Activated CD4-positive, alpha-beta T cell treated with anti-CD3 and anti-CD28 coated beads, Interleukin-2, amount 10 ng/mL, durations not matched to agents 24 days and 14 days (primary cell): ENCODE measurements at regions of chr4 and their contacts with region 1.

Region 1: GRCh38 chr4:100208964-100209363 is 18.7 kb upstream of the DDIT4L start:
- DNase-seq: peak; percentile 69
- H3K4me3 Mint-ChIP-seq: no peak overlapping the region
- H3K27ac Mint-ChIP-seq: peak overlapping the region; percentile 2
- H3K4me1 Mint-ChIP-seq: peaks cover 9% of the 10 kb centered on the region
- H3K27me3 Mint-ChIP-seq: peaks cover 14% of the 10 kb centered on the region

Region 2: DNA sequence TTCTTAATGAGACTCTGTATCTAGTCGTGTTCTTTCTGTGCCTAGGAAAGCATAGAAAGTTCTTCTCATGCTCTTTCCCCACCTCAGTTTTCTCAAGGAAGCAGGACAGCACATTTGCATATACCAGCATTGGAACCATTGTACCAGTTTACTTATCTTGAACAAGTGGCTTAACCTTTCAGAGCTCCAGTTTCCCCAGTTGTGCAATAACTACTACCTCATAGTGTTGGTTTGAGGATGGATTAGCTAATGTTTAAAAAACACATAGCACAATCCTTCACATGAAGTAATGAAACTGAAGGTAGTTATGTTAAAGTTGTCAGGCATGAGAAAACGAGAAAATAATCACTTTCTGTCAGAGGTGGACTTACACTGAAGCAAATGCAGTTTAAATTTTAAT is 166.7 kb before region 1 on chr4:
- intact Hi-C with region 1: no loop called
- DNase-seq: no peak
- H3K4me3 Mint-ChIP-seq: no peak overlapping the region
- H3K27ac Mint-ChIP-seq: no peak overlapping the region
- H3K4me1 Mint-ChIP-seq: no peaks in the 10 kb centered on the region
- H3K27me3 Mint-ChIP-seq: peaks cover 3% of the 10 kb centered on the region

Region 3: GRCh38 chr4:100106982-100107381 is 102.0 kb before region 1 on chr4:
- intact Hi-C with region 1: no loop called
- DNase-seq: peak; percentile 81
- H3K4me3 Mint-ChIP-seq: peak overlapping the region; percentile 24
- H3K27ac Mint-ChIP-seq: no peak overlapping the region
- H3K4me1 Mint-ChIP-seq: peaks cover 27% of the 10 kb centered on the region
- H3K27me3 Mint-ChIP-seq: no peaks in the 10 kb centered on the region

Region 4: GRCh38 chr4:100177855-100178254 is 31.1 kb before region 1 on chr4:
- intact Hi-C with region 1: no loop called
- DNase-seq: no peak
- H3K4me3 Mint-ChIP-seq: no peak overlapping the region
- H3K27ac Mint-ChIP-seq: no peak overlapping the region
- H3K4me1 Mint-ChIP-seq: no peaks in the 10 kb centered on the region
- H3K27me3 Mint-ChIP-seq: peaks cover 3% of the 10 kb centered on the region

Region 5: DNA sequence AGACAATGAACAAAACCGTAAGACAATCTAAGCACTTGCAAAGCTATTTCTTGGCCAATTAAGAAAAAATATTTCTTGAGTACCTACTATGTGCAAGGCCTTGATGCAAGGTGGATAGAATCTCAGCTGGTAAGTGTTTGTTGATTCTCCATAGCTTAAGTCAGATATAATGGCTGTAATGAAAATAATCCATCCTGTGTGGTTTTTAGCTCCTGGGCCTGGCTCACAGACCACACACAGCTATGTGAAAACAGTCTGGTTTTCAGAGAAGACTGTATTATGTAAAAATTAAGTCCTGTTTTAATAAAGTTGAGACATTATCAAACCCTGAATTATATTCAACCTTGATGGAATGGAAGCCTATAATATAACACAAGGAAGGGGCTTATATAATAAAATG is 10.9 kb before region 1 on chr4:
- intact Hi-C with region 1: loop called (anchors 1 kb)
- DNase-seq: no peak
- H3K4me3 Mint-ChIP-seq: no peak overlapping the region
- H3K27ac Mint-ChIP-seq: no peak overlapping the region
- H3K4me1 Mint-ChIP-seq: no peaks in the 10 kb centered on the region
- H3K27me3 Mint-ChIP-seq: peaks cover 12% of the 10 kb centered on the region

Region 6: DNA sequence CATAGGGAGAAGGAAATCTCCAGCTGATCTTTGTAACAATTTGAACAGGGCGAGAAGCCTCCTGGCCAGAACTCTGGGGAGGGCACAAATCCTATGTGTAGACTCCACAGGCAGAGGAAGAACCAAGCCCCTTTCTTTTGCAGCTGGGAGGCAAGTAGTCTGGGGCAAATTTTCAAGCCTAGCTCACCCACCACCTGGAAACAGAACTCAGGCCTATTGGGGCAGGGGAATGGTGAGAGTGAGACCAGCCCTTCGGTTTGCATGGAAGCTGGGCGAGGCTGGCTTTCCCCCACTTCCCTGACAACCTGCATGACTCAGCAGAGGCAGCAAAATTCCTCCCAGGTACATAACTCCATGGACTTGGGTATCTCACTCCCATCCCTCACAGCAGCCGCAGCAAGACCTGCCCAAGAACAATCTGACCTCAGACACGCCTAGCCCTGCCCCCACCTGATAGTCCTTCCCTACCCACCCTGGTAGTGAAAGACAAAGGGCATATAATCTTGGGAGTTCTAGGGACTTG is 170.7 kb after region 1 on chr4:
- intact Hi-C with region 1: no loop called
- DNase-seq: no peak
- H3K4me3 Mint-ChIP-seq: no peak overlapping the region
- H3K27ac Mint-ChIP-seq: no peak overlapping the region
- H3K4me1 Mint-ChIP-seq: no peaks in the 10 kb centered on the region
- H3K27me3 Mint-ChIP-seq: peaks cover 3% of the 10 kb centered on the region